Tibial artery (tissue), 4 donors: ENCODE measurements at regions of chr4 and their contacts with region 1.

Region 1: GRCh38 chr4:129064717-129065116 is 28.6 kb downstream of the SCLT1 start:
- DNase-seq: no peak
- H3K4me3 ChIP-seq: no peak overlapping the region
- H3K27ac ChIP-seq: no peak overlapping the region
- H3K4me1 ChIP-seq: no peaks in the 10 kb centered on the region
- H3K27me3 ChIP-seq: no peaks in the 10 kb centered on the region
- CTCF ChIP-seq: no peak

Region 2: GRCh38 chr4:128177498-128177897 is 887.2 kb before region 1 on chr4:
- intact Hi-C with region 1: no loop called
- DNase-seq: no peak
- H3K4me3 ChIP-seq: no peak overlapping the region
- H3K27ac ChIP-seq: no peak overlapping the region
- H3K4me1 ChIP-seq: no peaks in the 10 kb centered on the region
- H3K27me3 ChIP-seq: no peaks in the 10 kb centered on the region
- CTCF ChIP-seq: no peak

Region 3: DNA sequence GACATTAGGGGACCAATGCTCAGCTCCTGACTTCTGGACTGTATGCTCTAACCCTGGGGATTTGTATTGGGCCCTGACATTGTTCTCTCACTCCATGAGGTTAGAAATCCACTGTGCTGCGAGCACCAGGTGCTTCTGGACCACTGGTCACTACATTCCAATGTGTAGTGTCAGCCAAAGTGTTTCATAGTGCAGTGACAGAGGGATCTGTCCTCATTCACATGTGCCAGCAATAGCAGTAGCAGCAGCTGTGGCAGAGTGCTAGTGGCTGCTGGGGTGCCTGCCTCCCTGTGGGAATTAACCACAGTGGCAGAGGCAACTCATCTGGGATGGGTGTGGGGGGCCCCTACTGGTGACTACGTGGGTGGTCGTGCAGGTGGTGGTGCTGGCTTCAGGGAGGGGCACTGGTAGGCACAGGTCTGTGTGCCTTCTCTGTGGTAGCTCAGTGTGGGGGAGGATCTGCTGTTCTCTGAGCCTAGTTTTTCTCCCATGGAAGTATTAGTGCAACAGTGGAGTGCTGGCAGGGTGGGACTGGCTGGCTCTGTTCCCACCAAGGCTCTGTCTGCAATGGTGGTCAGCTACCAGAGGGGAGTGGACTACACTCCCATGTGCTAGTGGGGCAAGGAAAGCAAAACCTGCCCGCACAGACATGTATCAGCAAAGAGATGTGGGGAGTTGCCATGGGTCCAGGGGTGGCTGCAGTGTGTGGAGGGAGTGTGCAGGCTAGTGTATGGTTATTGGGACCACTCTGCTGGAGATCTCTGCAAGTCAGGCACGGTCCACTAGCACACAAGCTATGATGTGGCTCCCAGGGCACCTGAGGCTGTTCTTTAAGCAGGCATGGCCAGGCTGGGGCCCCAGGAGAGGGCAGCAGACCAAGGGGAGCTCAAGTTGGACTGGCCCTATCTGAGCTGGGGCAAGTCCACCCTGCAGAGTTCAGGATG is 49.9 kb before region 1 on chr4:
- intact Hi-C with region 1: loop called (anchors 10 kb)
- DNase-seq: no peak
- H3K4me3 ChIP-seq: no peak overlapping the region
- H3K27ac ChIP-seq: no peak overlapping the region
- H3K4me1 ChIP-seq: no peaks in the 10 kb centered on the region
- H3K27me3 ChIP-seq: no peaks in the 10 kb centered on the region
- CTCF ChIP-seq: no peak